ENCODE measurements at regions of chr4 and their contacts with region 1.

Region 1: GRCh38 chr4:122577808-122578781 is 42.8 kb downstream of the IL21 start:
- DNase-seq: peak; percentile 70
- H3K4me3 Mint-ChIP-seq: peak overlapping the region; percentile 80
- H3K27ac Mint-ChIP-seq: peak overlapping the region; percentile 96
- H3K4me1 Mint-ChIP-seq: peaks cover 63% of the 10 kb centered on the region
- H3K27me3 Mint-ChIP-seq: no peaks in the 10 kb centered on the region

Region 2: GRCh38 chr4:121823505-121824170 is 754.5 kb before region 1 on chr4 and contains the start of gene CCNA2:
- intact Hi-C with region 1: loop called (anchors 5 kb)
- DNase-seq: peak; percentile 95
- H3K4me3 Mint-ChIP-seq: peak within 1 kb of the TSS; percentile 94
- H3K27ac Mint-ChIP-seq: peak within 1 kb of the TSS; percentile 91
- H3K4me1 Mint-ChIP-seq: peaks cover 45% of the 10 kb centered on the region
- H3K27me3 Mint-ChIP-seq: no peaks in the 10 kb centered on the region
- total RNA-seq, gene CCNA2: 59.9 and 64.3 TPM in 2 replicates

Region 3: DNA sequence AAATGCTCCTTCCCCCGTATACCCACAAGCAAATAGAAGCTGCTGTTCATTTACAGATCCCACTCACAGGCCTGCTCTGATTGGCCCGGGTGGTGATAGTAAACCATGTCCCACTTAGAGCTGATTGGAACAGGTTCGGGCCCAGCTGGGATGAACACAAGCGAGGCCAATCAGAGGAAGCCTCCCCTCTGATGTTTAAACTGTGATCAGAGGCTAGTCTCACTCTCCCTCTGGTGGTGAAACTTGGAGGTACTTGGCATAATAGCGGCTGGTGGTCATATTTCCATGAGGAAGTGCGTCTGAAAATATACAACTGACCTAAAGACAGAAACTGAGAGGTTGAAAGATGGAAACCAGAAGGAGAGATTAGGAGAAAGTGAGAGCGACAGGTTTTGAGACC is 574.8 kb before region 1 on chr4:
- intact Hi-C with region 1: loop called (anchors 2 kb)
- DNase-seq: no peak
- H3K4me3 Mint-ChIP-seq: no peak overlapping the region
- H3K27ac Mint-ChIP-seq: no peak overlapping the region
- H3K4me1 Mint-ChIP-seq: peaks cover 14% of the 10 kb centered on the region
- H3K27me3 Mint-ChIP-seq: peaks cover 5% of the 10 kb centered on the region

Region 4: DNA sequence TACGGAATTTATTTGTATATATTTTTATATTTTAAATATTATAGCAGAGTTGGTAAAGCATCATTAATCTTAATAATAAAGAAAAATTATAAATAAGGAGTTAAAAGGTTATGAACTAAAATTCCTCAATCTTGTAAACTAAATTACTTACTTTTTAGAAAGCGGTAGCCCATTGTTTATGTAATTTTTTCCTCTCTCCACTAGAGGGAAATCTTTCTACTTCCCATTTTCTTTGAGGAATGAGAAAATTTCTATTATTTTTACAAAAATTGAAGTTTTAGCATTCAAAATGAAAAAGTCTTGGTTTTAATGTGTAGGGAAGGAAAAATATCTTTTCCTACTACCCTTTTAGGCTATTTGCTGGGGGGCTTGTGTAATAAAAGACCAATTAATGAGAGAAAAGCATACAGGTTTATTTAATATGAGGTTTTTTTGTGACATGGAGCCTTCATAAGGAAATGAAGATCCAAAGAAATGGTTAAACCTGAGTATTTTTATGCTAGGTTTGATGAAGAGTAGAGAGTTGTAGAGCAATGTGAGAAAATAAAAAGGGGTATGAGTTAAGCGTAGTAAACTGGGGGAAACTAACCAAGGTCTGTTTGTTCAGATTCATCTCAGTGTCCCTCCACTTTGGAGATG is 268.0 kb before region 1 on chr4:
- intact Hi-C with region 1: loop called (anchors 1 kb)
- DNase-seq: no peak
- H3K4me3 Mint-ChIP-seq: no peak overlapping the region
- H3K27ac Mint-ChIP-seq: no peak overlapping the region
- H3K4me1 Mint-ChIP-seq: peaks cover 6% of the 10 kb centered on the region
- H3K27me3 Mint-ChIP-seq: no peaks in the 10 kb centered on the region

Region 5: GRCh38 chr4:122542411-122543236 is 35.5 kb before region 1 on chr4:
- intact Hi-C with region 1: loop called (anchors 1 kb)
- DNase-seq: no peak
- H3K4me3 Mint-ChIP-seq: peak overlapping the region; percentile 71
- H3K27ac Mint-ChIP-seq: peak overlapping the region; percentile 93
- H3K4me1 Mint-ChIP-seq: peaks cover 85% of the 10 kb centered on the region
- H3K27me3 Mint-ChIP-seq: no peaks in the 10 kb centered on the region

Region 6: DNA sequence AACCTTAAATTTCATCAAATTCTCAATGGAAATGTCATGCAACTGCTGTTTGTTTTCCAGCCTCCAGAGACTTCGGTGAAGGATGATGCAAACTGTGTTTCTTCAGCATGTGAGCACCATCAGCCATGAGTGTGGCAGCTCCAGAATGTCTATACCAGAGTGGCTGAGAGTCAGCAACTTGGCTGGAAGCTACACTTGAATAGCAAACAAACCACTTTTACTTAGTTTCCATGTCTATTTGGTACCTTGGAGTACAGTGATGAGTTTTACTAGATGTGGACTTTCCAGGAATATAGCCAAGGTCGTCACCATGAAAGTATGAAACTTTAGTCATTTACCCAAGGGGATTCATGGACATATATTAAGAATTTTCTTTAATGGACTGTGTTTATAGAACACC is 47.1 kb after region 1 on chr4:
- intact Hi-C with region 1: no loop called
- DNase-seq: no peak
- H3K4me3 Mint-ChIP-seq: no peak overlapping the region
- H3K27ac Mint-ChIP-seq: no peak overlapping the region
- H3K4me1 Mint-ChIP-seq: peaks cover 39% of the 10 kb centered on the region
- H3K27me3 Mint-ChIP-seq: no peaks in the 10 kb centered on the region

Region 7: GRCh38 chr4:122710434-122711308 is 132.6 kb after region 1 on chr4:
- intact Hi-C with region 1: loop called (anchors 1 kb)
- DNase-seq: peak; percentile 31
- H3K4me3 Mint-ChIP-seq: peak overlapping the region; percentile 67
- H3K27ac Mint-ChIP-seq: peak overlapping the region; percentile 97
- H3K4me1 Mint-ChIP-seq: peaks cover 83% of the 10 kb centered on the region
- H3K27me3 Mint-ChIP-seq: peaks cover 2% of the 10 kb centered on the region